Sigmoid colon (tissue), 7 donors: ENCODE measurements at regions of chr12 and their contacts with region 1.

Region 1: DNA sequence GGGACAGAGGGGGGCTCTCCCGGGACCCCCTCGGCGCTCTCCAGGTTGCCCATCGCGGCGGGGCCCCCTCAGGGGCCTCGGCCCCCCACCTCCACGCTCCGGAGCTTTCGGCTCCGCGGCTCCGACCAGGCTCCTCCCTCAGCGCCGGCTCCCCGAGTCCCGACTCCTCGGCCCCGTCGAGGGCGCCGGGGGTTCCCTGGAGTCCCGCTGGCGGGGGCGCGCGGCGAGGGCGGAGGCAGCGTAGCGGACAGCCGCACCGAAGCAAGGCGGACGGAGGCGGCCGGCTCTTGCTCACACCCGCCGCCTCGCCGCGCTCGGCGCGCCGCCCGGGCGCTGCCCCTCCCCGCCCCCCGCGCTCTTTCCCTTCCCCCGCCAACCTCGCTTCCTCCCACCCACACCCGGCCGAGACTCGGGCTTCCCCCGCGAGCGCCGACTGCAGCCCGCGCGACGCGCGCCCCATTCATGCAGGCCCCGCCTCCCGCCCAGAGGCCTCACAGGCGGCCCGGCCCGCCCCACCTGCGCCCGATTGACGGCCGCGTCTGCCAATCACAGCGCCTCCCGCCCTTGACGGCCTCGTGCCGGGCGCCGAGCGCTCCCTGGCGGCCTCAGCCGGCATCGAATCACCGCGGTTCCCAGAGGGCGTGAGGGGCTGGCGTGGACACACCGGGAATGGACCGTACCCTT is at the start of gene FMNL3:
- DNase-seq: peak; percentile 99
- H3K4me3 ChIP-seq: peak within 1 kb of the TSS; percentile 55 to 97 (median 84)
- H3K27ac ChIP-seq: peak within 1 kb of the TSS; percentile 82 to 95 (median 89)
- H3K4me1 ChIP-seq: peaks cover 0 to 28% (median 18%) of the 10 kb centered on the region in 4 donors
- H3K27me3 ChIP-seq: no peaks in the 10 kb centered on the region
- CTCF ChIP-seq: peak; percentile 94 to 98 (median 98)
- EP300 ChIP-seq: no peak
- POLR2A ChIP-seq: peak in 1 of 2 donors; percentile 30
- total RNA-seq, gene FMNL3: 9.4 to 12.2 (median 11.0) TPM

Region 2: DNA sequence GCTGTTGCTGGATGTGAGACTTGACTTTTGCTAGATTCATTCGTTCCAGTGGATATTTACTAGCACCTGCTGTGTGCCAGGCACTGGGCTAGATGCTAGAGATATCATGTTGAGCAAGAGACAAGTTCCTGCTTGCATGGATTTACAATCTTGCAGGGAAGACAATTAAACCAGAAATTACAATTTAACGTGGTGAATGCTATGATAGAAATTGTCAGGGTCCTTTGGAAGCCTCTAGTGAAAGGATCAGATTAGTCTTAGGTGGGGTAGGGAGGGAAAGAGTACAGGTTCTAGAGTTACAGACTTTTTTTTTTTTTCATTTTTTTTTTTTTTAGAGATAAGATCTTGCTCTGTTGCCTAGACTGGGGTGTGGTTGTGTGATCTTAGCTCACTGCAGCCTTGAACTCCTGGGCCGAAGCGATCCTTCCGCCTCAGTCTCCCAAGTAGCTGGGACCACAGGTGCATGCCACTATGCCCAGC is 303.3 kb before region 1 on chr12:
- intact Hi-C with region 1: no loop called
- DNase-seq: no peak
- H3K4me3 ChIP-seq: no peak overlapping the region
- H3K27ac ChIP-seq: no peak overlapping the region
- H3K4me1 ChIP-seq: no peaks in the 10 kb centered on the region
- H3K27me3 ChIP-seq: no peaks in the 10 kb centered on the region
- CTCF ChIP-seq: no peak
- EP300 ChIP-seq: no peak
- POLR2A ChIP-seq: no peak

Region 3: DNA sequence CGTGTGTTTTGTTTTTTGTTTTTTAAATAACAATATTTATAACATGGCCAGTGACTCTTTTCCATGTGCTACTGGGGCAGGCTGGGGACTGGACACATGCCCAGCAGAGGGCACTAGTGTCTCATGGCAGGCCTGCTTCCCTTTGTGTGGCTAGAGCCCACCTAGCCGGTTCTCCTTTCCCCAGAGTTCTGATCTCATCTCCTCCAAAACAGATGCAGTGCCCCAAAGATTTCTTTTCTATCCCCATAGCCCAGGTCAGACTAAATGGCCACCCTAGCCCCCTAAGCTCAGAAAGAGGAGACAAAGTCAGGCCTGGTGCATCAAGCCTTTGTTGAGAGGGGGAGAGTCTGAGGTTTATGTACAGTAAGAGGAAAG is 62.7 kb before region 1 on chr12:
- intact Hi-C with region 1: loop called (anchors 1 kb)
- DNase-seq: peak; percentile 93
- H3K4me3 ChIP-seq: no peak overlapping the region
- H3K27ac ChIP-seq: peak overlapping the region in 3 of 4 donors; percentile 11 to 40 (median 18)
- H3K4me1 ChIP-seq: peaks cover 0 to 22% (median 10%) of the 10 kb centered on the region in 4 donors
- H3K27me3 ChIP-seq: no peaks in the 10 kb centered on the region
- CTCF ChIP-seq: peak; percentile 93 to 98 (median 95)
- EP300 ChIP-seq: no peak
- POLR2A ChIP-seq: no peak

Region 4: GRCh38 chr12:49673446-49674317 is 33.6 kb before region 1 on chr12:
- intact Hi-C with region 1: loop called (anchors 1 kb)
- DNase-seq: peak; percentile 98
- H3K4me3 ChIP-seq: peak overlapping the region in 2 of 4 donors; percentile 9 to 14
- H3K27ac ChIP-seq: peak overlapping the region; percentile 87 to 93 (median 92)
- H3K4me1 ChIP-seq: peaks cover 0 to 59% (median 49%) of the 10 kb centered on the region in 4 donors
- H3K27me3 ChIP-seq: no peaks in the 10 kb centered on the region
- CTCF ChIP-seq: peak; percentile 55 to 87 (median 75)
- EP300 ChIP-seq: peak in 2 of 4 donors; percentile 14 to 34
- POLR2A ChIP-seq: peak; percentile 41 to 54